Activated T-helper 2 cell treated with anti-CD3 and anti-CD28 coated beads, Interferon-gamma antibody, Interleukin-2, Interleukin-4, amounts not matched to agents 10 μg/mL and 5 μg/mL and 100 μg/mL, durations not matched to agents 14 hours and 24 hours and 36 hours (primary cell): ENCODE measurements at regions of chr1 and their contacts with region 1.

Region 1: DNA sequence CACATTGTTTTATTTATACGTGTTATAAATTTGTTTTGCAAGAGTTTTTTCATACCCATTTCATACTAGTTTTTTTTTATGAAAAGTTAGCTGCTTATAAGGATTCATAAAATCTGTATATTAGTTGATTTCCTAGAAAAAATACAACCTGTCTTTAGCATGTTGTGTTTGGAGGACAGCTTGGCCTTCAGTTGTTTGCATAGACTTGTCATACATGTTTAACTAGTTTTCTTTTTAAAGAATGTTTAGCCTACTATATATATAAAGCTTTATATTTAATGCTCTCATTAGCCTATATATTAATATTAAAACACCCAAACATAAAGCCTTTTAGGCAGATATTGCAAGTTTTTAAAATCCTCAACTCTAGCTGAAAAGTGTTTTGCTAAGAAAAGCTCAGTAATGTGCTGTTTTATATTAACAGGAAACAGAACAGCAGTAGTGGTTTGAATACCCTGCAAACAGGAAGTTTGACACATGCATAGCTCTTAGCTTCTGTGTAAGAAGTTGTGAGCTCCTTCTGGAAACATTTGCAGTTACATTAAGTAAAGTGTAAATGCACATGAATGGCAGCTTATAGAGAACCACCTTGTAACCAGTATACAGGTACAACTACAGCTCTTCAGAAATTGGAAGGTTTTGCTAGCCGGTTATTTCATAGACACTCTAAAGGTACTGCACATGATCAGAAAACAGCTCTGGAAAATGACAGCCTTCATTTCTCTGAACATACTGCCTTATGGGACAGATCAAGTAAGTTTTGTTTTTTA is at the start of gene PRKACB:
- DNase-seq: no peak
- H3K4me3 Mint-ChIP-seq: peak within 1 kb of the TSS; percentile 95
- H3K27ac Mint-ChIP-seq: peak within 1 kb of the TSS; percentile 98
- H3K4me1 Mint-ChIP-seq: peaks cover 36% of the 10 kb centered on the region
- H3K27me3 Mint-ChIP-seq: no peaks in the 10 kb centered on the region
- total RNA-seq, gene PRKACB: 16.4 and 20.9 TPM in 2 replicates

Region 2: GRCh38 chr1:84122780-84123382 is 21.1 kb before region 1 on chr1:
- intact Hi-C with region 1: no loop called
- DNase-seq: no peak
- H3K4me3 Mint-ChIP-seq: no peak overlapping the region
- H3K27ac Mint-ChIP-seq: no peak overlapping the region
- H3K4me1 Mint-ChIP-seq: no peaks in the 10 kb centered on the region
- H3K27me3 Mint-ChIP-seq: peaks cover 3% of the 10 kb centered on the region

Region 3: GRCh38 chr1:84156210-84156621 is 12.2 kb after region 1 on chr1:
- intact Hi-C with region 1: loop called (anchors 1 kb)
- DNase-seq: no peak
- H3K4me3 Mint-ChIP-seq: no peak overlapping the region
- H3K27ac Mint-ChIP-seq: no peak overlapping the region
- H3K4me1 Mint-ChIP-seq: peaks cover 57% of the 10 kb centered on the region
- H3K27me3 Mint-ChIP-seq: no peaks in the 10 kb centered on the region

Region 4: DNA sequence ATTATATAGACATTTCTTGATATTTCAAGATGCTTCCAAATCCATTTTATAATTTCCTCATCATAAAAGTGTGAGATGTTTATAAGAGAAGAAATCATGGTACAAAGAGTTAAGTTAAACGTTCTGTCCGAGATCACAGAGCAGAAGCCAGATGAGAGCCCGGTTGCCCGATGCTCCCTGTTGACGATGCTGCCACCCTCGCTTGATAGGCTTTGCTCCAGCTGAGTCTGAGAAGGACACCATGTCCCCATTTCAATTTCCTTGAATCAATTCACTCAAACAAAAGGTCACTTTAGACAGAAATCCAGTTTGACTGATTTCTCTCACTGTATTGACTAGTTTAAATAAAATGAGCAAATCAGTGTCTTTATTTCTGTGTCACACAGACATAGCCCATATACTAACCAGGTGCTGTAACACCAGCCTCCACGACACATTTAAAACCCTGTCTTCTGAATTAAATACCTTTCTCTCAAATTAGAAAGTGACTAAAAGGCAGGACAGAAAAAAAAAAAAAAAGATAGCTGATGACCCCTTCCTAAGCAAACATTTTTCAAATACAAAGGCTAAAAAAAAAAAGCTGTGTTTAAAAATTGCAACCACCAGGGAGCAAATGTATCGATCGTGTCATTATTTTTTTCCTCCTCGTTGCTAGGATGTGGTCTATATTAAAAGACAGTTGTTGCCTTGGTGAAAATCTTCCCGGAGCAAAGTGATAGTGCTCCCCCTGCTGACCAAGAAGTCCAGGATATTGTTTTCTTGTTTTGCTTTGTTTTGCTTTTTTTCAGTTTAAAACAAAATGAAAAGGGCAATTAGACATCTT is 289.5 kb after region 1 on chr1:
- intact Hi-C with region 1: loop called (anchors 1 kb)
- DNase-seq: peak; percentile 54
- H3K4me3 Mint-ChIP-seq: peak overlapping the region; percentile 18
- H3K27ac Mint-ChIP-seq: no peak overlapping the region
- H3K4me1 Mint-ChIP-seq: peaks cover 3% of the 10 kb centered on the region
- H3K27me3 Mint-ChIP-seq: no peaks in the 10 kb centered on the region

Region 5: DNA sequence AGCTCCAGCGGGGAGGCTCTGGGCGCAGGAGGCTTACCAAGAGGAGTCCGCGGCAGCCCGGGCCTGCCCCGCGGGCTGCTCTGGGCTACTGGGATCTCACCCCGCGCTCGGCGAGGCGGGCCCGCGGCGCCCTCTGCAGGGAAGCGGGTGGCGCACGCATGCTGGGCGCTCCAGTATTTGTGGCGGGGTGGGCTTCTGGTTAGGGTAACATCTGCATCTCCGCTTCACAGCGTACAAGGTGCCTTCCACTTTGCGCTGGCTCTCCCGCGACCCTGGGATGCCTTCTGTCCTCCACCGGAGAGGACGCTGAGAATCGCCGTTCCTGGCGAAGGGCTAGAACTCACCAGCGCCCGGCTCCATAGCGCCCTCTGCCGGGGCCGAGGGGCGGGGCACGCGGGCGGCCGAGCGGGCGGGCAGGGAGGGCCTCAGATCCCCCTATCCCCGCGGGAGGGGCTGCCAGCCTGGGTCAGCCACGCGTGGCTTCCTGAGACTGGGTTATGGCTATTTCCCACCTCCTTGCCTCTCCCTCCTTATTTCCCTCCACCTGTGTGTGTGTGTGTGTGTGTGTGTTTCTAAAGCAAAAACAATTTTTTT is 476.8 kb after region 1 on chr1:
- intact Hi-C with region 1: loop called (anchors 2 kb)
- DNase-seq: peak; percentile 77
- H3K4me3 Mint-ChIP-seq: peak overlapping the region; percentile 89
- H3K27ac Mint-ChIP-seq: peak overlapping the region; percentile 88
- H3K4me1 Mint-ChIP-seq: peaks cover 23% of the 10 kb centered on the region
- H3K27me3 Mint-ChIP-seq: peaks cover under 1% of the 10 kb centered on the region

Region 6: GRCh38 chr1:84772428-84772943 is 628.5 kb after region 1 on chr1:
- intact Hi-C with region 1: loop called (anchors 1 kb)
- DNase-seq: peak; percentile 30
- H3K4me3 Mint-ChIP-seq: no peak overlapping the region
- H3K27ac Mint-ChIP-seq: no peak overlapping the region
- H3K4me1 Mint-ChIP-seq: no peaks in the 10 kb centered on the region
- H3K27me3 Mint-ChIP-seq: peaks cover 24% of the 10 kb centered on the region